Activated T-helper 1 cell treated with anti-CD3 and anti-CD28 coated beads, Interleukin-12 subunit alpha, Interleukin-12 subunit beta, Interleukin-2, Interleukin-4 antibody, amounts not matched to agents 30 ng/mL and 10 ng/mL and 1 ng/mL, durations not matched to agents 14 hours and 24 hours and 36 hours (primary cell): ENCODE measurements at regions of chr4 and their contacts with region 1.

Region 1: DNA sequence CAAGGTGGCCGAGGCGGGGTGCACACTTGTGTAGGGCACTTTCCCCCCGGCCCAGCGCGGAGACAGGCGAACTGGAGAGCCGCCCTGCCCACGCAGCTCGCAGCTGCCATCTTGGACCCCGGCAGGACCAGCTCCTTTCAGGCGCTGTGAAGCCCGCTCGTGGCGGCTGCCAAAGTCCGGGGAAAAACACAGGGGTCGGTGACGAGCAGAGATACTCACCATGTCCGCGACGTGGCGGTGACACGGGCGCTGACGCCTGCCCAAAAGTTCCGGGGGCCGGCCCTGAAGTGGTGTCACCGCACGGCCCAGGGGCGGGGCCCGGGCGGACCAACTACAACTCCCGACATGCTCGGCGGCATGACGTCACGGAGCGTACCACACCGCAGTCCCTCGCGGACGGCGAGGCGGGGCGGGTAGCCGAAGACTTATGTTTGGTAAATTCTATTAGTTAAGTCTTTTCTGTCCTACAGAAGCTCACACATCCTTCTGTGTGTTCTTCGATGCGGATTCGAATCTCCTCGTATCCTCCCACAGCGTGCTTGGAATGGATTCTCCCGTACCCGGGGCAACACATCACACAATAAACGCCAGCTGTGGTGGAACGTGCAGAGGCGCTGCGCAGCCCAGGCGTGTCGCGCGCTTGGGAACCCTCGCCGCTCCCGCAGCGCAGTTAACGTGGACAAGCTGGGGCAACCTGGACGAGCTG is at the start of gene UFSP2:
- DNase-seq: peak; percentile 86
- H3K4me3 Mint-ChIP-seq: peak within 1 kb of the TSS; percentile 88
- H3K27ac Mint-ChIP-seq: peak within 1 kb of the TSS; percentile 92
- H3K4me1 Mint-ChIP-seq: peaks cover 35% of the 10 kb centered on the region
- H3K27me3 Mint-ChIP-seq: peaks cover 7% of the 10 kb centered on the region
- total RNA-seq, gene UFSP2: 19.8 and 19.9 TPM in 2 replicates

Region 2: DNA sequence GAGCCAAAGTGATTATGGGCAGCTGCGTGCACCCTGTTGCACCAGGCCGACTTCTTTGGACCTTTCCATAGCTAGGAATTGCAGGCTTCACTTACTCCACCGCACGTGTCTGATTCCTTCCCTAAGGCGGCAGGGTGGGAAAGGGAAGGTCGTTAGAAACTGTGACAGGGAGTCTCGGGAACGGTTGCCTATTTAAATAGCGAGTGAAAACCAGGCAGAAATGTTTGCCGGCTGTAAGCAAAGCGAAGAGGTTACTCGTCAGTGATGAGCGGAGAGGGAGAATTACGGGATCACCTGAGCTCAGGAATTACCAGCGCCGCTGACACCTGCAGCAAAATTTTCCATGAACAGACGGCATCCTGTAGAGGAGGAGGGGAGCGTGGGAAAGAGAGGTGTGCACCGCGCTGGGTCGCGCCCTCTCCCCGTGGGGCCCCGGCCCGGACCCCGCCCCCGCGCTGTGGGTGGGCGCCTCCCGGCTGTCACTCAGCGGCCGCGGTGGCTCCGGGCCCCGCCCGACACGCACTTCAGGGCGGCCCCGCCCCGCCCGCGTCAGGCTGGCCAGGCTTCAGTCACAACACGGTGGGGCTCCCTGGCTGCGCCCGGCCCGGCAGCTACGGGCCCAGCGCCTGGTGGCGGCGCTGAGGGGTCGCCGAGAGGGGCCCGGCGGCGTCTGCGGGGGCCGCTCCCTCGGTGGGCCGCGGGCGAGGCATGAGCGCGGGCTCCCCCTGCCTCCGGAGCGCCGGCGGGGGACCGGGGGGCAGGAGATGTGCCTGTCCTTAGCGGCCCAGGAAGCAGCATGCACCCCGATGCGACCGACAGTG is 216.6 kb before region 1 on chr4 and contains the start of gene SNX25:
- intact Hi-C with region 1: loop called (anchors 1 kb)
- DNase-seq: peak; percentile 86
- H3K4me3 Mint-ChIP-seq: peak within 1 kb of the TSS; percentile 92
- H3K27ac Mint-ChIP-seq: peak within 1 kb of the TSS; percentile 86
- H3K4me1 Mint-ChIP-seq: peaks cover 38% of the 10 kb centered on the region
- H3K27me3 Mint-ChIP-seq: peaks cover 4% of the 10 kb centered on the region
- total RNA-seq, gene SNX25: 22.9 and 25.3 TPM in 2 replicates

Region 3: GRCh38 chr4:185405296-185405999 is 20.4 kb before region 1 on chr4:
- intact Hi-C with region 1: no loop called
- DNase-seq: no peak
- H3K4me3 Mint-ChIP-seq: no peak overlapping the region
- H3K27ac Mint-ChIP-seq: no peak overlapping the region
- H3K4me1 Mint-ChIP-seq: peaks cover 14% of the 10 kb centered on the region
- H3K27me3 Mint-ChIP-seq: no peaks in the 10 kb centered on the region

Region 4: DNA sequence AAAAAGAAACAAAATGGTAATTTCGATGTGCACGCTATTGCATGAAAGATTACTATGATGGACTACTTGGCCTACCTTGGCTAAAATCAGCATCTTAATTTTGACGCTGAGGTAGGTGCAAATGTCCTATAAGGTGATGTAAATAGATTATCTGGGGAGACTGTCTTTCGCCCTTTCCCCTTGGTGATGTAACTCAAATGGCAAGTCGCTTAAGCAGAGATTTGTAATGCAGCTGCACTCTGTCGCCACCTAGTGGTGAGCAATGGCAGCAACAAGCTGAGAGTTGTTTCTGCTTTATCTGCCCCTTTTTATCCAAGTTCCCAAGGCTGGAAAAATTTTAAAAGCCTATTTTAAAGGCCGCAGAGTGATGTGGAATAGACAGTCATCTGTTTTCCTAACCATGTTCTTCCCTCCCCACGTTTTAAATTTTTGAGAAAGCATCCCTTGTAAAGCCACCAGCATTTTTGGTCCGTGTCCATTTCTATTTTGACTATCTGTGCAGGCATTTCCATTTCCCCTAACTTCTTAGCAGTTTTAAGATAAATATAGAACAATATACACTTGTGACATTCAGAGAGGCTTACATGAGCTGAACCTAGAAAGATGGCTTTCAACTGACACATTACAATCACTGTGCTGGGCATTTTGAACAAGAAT is 171.9 kb after region 1 on chr4:
- intact Hi-C with region 1: loop called (anchors 5 kb)
- DNase-seq: peak; percentile 32
- H3K4me3 Mint-ChIP-seq: no peak overlapping the region
- H3K27ac Mint-ChIP-seq: no peak overlapping the region
- H3K4me1 Mint-ChIP-seq: no peaks in the 10 kb centered on the region
- H3K27me3 Mint-ChIP-seq: peaks cover 13% of the 10 kb centered on the region